Activated T-helper 1 cell treated with anti-CD3 and anti-CD28 coated beads, Interleukin-12 subunit alpha, Interleukin-12 subunit beta, Interleukin-2, Interleukin-4 antibody, amounts not matched to agents 30 ng/mL and 10 ng/mL and 1 ng/mL, durations not matched to agents 14 hours and 24 hours and 36 hours (primary cell): ENCODE measurements at regions of chr20 and their contacts with region 1.

Region 1: DNA sequence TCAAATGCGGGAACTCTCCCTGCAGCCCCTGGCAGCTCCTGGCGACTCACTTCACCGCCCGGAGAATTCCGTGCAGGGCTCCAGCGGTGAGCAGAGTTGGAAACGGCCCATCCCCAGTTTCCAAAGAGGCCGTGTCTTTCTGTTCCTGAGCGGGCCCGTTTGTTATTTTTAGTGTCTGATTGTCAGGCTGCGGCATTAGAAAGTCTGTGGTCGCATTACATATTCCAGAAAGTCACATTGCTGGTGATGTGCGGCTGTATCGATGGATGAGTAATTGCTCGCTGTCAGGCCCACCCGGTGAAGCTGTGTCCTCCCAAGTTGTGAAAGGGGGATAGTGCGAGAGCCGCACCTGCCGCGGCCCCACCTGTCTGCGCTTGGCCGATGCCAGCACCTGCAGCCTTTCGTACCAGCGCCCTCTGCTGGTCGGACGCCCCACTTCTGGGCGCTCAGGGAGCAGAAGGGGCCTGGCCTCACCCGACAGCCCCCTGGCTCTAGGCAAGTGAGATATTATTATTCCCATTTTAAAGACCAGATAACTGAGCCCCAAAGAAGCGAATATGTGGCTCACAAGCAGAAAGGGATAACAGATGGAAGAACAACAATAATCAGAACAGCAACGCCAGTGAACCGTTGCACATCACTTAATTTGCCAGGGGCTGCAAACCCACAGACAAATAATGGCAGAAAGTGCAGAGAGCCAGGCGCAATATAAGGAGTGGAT is 244.9 kb downstream of the TSHZ2 start:
- DNase-seq: peak; percentile 66
- H3K4me3 Mint-ChIP-seq: peak overlapping the region; percentile 51
- H3K27ac Mint-ChIP-seq: peak overlapping the region; percentile 59
- H3K4me1 Mint-ChIP-seq: peaks cover 53% of the 10 kb centered on the region
- H3K27me3 Mint-ChIP-seq: no peaks in the 10 kb centered on the region

Region 2: DNA sequence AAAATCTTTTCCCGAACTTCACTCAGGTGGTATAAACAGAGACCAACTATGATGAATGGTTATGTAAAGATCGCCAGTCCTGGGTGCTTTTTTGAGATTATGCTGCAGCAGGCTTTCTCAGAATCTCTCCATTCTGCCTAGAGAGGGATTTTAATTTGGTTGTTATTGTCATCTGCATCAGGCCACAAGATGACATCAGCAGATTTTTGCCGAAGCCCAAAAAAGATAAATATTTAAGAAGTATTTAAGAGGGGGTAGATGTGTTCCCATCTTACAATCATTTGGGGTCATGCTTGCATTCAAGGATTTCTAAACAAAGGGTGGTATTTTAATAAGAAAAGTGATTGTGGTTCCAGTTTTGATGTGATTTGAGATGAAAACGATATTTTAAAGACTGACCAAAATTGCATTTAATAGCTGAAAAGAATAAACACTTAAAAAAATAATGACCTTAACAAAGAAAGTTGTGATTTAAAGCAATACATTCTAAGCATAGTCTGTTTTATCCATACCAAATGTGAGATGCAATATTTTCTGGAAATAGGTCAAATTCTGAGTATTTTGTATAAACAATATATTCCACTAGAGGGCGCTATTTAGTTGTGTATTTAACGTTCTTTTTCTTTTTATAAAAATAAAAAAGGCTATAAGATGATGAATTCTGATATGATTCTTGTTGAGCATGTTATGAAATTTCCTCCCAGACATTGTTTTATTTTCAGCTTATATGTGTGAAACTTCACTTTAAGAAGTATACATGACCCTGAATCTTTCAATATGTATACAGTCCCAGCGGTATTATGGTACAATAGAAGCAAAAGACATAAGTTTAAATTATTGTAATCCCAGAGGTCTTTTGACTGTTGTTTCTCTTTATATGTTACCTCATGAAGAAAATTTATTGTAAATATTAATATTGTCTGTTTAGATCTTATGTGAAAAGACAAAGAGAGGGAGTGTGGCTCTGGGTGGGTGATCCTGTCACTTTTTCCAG is 974.5 kb before region 1 on chr20:
- intact Hi-C with region 1: loop called (anchors 10 kb)
- DNase-seq: no peak
- H3K4me3 Mint-ChIP-seq: no peak overlapping the region
- H3K27ac Mint-ChIP-seq: no peak overlapping the region
- H3K4me1 Mint-ChIP-seq: no peaks in the 10 kb centered on the region
- H3K27me3 Mint-ChIP-seq: peaks cover 12% of the 10 kb centered on the region

Region 3: GRCh38 chr20:52410182-52410647 is 806.8 kb before region 1 on chr20:
- intact Hi-C with region 1: loop called (anchors 5 kb)
- DNase-seq: peak; percentile 38
- H3K4me3 Mint-ChIP-seq: peak overlapping the region; percentile 53
- H3K27ac Mint-ChIP-seq: peak overlapping the region; percentile 66
- H3K4me1 Mint-ChIP-seq: peaks cover 43% of the 10 kb centered on the region
- H3K27me3 Mint-ChIP-seq: no peaks in the 10 kb centered on the region

Region 4: GRCh38 chr20:53070706-53071392 is 146.2 kb before region 1 on chr20:
- intact Hi-C with region 1: loop called (anchors 2 kb)
- DNase-seq: peak; percentile 19
- H3K4me3 Mint-ChIP-seq: peak overlapping the region; percentile 10
- H3K27ac Mint-ChIP-seq: peak overlapping the region; percentile 74
- H3K4me1 Mint-ChIP-seq: peaks cover 53% of the 10 kb centered on the region
- H3K27me3 Mint-ChIP-seq: peaks cover 2% of the 10 kb centered on the region

Region 5: DNA sequence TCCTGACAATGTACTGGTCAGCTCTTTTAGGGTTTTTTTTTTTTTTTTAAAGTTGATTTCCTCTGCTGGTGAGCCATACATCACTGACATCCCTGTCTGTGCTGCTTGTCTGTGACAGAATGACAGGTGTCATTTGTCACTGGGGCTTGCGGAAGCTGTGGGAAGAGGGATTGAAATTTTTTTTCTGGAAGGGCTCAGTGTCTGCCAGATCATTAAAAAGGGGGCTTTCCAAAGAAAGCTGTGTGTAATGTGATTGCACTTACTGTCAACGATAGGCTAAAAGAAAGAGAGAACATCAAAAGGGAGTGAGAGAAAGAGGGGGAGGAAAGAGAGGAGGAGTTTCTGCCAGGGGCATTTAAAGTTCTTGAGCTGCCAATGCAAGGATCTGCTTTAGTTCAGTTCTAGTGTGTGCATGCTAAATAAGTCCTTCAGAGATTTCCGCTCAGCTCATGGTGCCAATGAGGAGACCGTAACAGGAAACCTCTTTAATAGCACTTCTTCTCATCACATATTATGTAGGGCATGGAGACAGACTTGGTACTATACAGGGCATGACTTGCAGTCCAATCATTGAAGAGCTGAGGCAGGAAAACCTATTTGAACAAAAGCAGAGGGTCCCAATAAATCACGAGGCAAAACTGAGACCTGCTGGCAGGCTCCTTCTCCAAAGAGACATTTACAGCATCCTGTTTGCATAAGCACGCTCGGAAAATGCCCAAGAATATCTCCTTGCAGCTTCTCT is 67.7 kb before region 1 on chr20:
- intact Hi-C with region 1: loop called (anchors 1 kb)
- DNase-seq: no peak
- H3K4me3 Mint-ChIP-seq: peak overlapping the region; percentile 45
- H3K27ac Mint-ChIP-seq: peak overlapping the region; percentile 75
- H3K4me1 Mint-ChIP-seq: peaks cover 64% of the 10 kb centered on the region
- H3K27me3 Mint-ChIP-seq: no peaks in the 10 kb centered on the region

Region 6: DNA sequence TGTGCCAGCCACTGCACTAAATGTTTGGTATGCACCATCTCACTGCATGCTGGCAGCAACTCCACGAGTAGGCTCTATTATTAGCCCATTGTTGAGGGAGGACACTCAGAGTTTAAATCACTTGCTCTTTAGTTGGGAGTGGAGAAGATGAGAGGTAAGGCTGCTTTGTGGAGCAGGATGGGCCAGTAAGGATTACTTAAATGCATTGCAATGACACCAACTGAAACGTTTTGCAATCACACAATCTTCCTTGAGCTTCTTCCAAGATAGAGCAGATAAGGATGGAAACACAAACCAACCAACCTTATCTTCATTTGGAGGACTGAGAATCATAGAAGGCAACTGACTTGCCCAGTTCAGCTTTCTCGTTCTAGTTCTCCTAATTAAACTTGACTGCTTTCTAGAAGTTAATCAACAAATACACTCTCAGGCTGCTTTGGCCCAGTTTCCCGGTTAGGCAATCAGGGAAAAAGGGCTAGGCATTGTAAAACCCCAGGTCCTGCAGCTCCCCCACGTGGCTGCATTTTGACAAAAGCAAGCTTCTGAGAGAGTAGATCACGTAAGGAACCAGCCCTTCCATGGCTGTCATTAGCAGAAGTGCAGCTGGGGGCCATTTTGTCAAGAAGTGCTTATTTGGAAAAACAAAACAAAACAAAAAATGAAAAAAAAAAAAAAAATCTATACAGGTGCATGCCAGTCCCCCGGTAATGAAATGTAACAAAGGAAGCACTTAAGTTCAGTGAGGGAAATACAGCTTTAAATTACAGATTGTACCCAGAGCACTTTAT is 722.8 kb after region 1 on chr20:
- intact Hi-C with region 1: loop called (anchors 10 kb)
- DNase-seq: peak; percentile 54
- H3K4me3 Mint-ChIP-seq: no peak overlapping the region
- H3K27ac Mint-ChIP-seq: no peak overlapping the region
- H3K4me1 Mint-ChIP-seq: peaks cover 69% of the 10 kb centered on the region
- H3K27me3 Mint-ChIP-seq: no peaks in the 10 kb centered on the region